CD4-positive, alpha-beta memory T cell (primary cell): ENCODE measurements at regions of chr7 and their contacts with region 1.

Region 1: GRCh38 chr7:98168181-98168905 is 42.9 kb upstream of the BHLHA15 start:
- DNase-seq: peak; percentile 48 to 72 (median 54)
- H3K4me3 ChIP-seq: no peak overlapping the region
- H3K4me3 Mint-ChIP-seq: no peak overlapping the region
- H3K27ac ChIP-seq: no peak overlapping the region
- H3K27ac Mint-ChIP-seq: peak overlapping the region in 1 of 7 donors; percentile 57
- H3K4me1 ChIP-seq: no peaks in the 10 kb centered on the region
- H3K4me1 Mint-ChIP-seq: peaks cover 4 to 11% (median 9%) of the 10 kb centered on the region in 4 donors
- H3K27me3 ChIP-seq: no peaks in the 10 kb centered on the region
- H3K27me3 Mint-ChIP-seq: no peaks in the 10 kb centered on the region

Region 2: DNA sequence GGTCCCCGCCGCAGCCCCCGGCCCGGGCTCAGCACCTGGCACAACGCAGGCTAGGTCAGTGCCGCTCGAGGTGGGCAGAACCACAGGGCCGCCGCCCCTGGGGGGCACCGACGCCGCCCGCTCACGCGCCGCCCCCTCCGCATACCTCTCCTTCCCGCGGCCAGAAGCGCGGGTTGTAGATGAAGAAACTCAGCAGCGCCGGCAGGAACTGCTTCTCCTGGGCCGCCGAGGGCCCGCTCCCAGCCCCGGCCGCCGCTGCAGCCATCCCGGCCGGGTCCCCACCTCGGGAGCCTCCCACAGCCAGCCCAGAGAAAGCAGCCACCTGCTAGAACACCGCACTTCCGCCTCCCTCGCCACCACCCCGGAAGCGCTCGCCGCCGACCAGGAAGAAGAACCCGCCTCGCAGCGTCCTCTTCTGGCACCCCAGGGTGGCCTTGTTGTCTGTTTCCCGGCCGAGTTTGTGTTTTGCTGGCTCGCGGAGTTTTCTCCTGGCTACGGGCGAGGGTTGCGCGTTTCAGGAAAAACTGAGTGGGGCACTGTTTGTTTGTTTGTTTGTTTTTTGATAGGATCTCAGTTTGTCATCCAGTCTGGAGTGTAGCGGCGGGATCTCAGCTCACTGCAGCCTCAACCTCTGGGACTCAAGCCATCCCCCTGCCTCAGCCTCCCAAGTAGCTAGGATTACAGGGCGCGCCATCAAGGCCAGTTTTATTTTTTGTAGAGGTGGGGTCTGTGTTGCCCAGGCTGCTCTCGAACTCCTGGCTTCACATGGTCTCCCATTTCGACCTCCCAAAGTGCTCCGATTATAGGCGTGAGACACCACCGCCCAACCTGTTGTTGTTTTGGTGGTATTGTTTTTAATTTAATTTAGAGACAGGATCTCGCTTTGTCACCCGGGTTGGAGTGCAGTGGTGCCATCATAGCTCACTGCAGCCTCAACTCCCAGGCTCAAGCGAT is 196.1 kb before region 1 on chr7:
- CTCF ChIA-PET with region 1: no interaction called
- POLR2A ChIA-PET with region 1: no interaction called
- intact Hi-C with region 1: loop called (anchors 5 kb)
- DNase-seq: peak; percentile 81 to 85 (median 83)
- H3K4me3 ChIP-seq: peak overlapping the region; percentile 91 to 93
- H3K4me3 Mint-ChIP-seq: peak overlapping the region; percentile 93 to 98 (median 96)
- H3K27ac ChIP-seq: peak overlapping the region; percentile 65
- H3K27ac Mint-ChIP-seq: peak overlapping the region; percentile 86 to 96 (median 95)
- H3K4me1 ChIP-seq: peaks cover 15% of the 10 kb centered on the region
- H3K4me1 Mint-ChIP-seq: peaks cover 10 to 35% (median 19%) of the 10 kb centered on the region in 4 donors
- H3K27me3 ChIP-seq: no peaks in the 10 kb centered on the region
- H3K27me3 Mint-ChIP-seq: no peaks in the 10 kb centered on the region

Region 3: DNA sequence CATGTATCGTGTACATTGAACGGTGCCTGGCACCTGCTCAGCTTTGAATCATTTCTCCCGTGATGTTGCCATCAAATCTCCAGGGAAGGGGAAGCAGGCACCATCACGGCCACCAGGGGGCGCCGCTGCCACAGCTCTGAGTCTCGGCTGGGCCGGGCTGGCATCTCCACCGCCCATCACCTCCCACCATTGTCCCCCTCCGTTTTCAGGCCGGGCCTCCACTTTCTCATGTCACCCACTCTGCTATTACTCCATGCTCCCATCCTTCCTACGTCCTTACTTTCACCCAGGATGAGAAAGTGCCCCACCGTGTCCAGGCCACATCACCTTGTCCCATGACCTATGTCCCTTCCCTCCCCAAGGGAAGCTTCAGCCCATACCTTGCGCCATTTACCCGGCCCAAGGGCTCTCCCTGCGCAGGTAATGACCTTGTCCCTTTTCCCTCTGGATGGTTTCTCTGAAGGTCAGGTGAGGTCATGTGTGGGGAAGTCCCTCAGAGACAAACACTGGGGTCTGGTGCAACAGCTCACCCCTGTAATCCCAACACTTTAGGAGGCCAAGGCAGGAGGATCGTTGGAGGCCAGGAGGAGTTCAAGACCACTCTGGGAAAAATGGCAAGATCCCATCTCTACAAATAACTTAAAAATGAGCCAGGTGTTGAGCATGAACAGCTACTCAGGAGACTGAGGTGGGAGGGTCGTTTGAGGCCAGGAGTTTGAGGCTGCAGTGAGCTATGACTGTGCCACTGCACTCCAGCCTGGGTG is 146.6 kb before region 1 on chr7:
- CTCF ChIA-PET with region 1: interaction called, 331 read pairs
- POLR2A ChIA-PET with region 1: interaction called, 3 read pairs
- intact Hi-C with region 1: loop called (anchors 1 kb)
- DNase-seq: peak; percentile 61 to 69 (median 64)
- H3K4me3 ChIP-seq: no peak overlapping the region
- H3K4me3 Mint-ChIP-seq: no peak overlapping the region
- H3K27ac ChIP-seq: no peak overlapping the region
- H3K27ac Mint-ChIP-seq: peak overlapping the region in 2 of 7 donors; percentile 34 to 37
- H3K4me1 ChIP-seq: no peaks in the 10 kb centered on the region
- H3K4me1 Mint-ChIP-seq: peaks cover 0 to 5% (median 4%) of the 10 kb centered on the region in 4 donors
- H3K27me3 ChIP-seq: no peaks in the 10 kb centered on the region
- H3K27me3 Mint-ChIP-seq: peaks cover 2 to 13% of the 10 kb centered on the region in 2 donors

Region 4: DNA sequence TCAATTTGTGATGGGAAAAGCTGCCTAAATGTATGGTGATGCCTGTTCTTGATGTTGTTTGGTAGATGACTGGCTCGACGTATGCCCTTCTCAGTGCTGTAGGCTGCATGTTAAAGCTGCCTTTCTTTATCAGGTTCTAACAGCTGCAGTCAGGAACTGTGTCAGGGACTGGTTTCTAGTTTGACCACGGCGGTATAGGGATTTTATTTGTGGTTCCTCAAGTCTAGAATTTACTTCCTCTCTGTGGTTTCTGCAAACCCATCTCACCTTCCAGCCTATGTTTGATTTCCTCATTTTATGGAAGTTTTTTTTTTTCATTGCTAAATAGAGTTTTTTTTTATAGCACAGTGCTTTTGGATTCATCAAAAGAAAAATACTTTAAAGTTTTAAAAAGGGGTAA is 35.2 kb before region 1 on chr7:
- CTCF ChIA-PET with region 1: interaction called, 19 read pairs
- POLR2A ChIA-PET with region 1: no interaction called
- intact Hi-C with region 1: no loop called
- DNase-seq: peak; percentile 33 to 54 (median 45)
- H3K4me3 ChIP-seq: peak overlapping the region in 1 of 2 donors; percentile 27
- H3K4me3 Mint-ChIP-seq: peak overlapping the region in 7 of 8 donors; percentile 42 to 82 (median 67)
- H3K27ac ChIP-seq: no peak overlapping the region
- H3K27ac Mint-ChIP-seq: peak overlapping the region in 2 of 7 donors; percentile 5 to 45
- H3K4me1 ChIP-seq: peaks cover 43% of the 10 kb centered on the region
- H3K4me1 Mint-ChIP-seq: peaks cover 44 to 62% (median 51%) of the 10 kb centered on the region in 4 donors
- H3K27me3 ChIP-seq: no peaks in the 10 kb centered on the region
- H3K27me3 Mint-ChIP-seq: peaks cover 0 to 1% of the 10 kb centered on the region in 2 donors

Region 5: GRCh38 chr7:98178347-98178746 is 10.0 kb after region 1 on chr7:
- CTCF ChIA-PET with region 1: interaction called, 44 read pairs
- POLR2A ChIA-PET with region 1: no interaction called
- intact Hi-C with region 1: no loop called
- DNase-seq: no peak
- H3K4me3 ChIP-seq: no peak overlapping the region
- H3K4me3 Mint-ChIP-seq: no peak overlapping the region
- H3K27ac ChIP-seq: no peak overlapping the region
- H3K27ac Mint-ChIP-seq: peak overlapping the region in 1 of 7 donors; percentile 17
- H3K4me1 ChIP-seq: no peaks in the 10 kb centered on the region
- H3K4me1 Mint-ChIP-seq: no peaks in the 10 kb centered on the region
- H3K27me3 ChIP-seq: no peaks in the 10 kb centered on the region
- H3K27me3 Mint-ChIP-seq: no peaks in the 10 kb centered on the region

Region 6: DNA sequence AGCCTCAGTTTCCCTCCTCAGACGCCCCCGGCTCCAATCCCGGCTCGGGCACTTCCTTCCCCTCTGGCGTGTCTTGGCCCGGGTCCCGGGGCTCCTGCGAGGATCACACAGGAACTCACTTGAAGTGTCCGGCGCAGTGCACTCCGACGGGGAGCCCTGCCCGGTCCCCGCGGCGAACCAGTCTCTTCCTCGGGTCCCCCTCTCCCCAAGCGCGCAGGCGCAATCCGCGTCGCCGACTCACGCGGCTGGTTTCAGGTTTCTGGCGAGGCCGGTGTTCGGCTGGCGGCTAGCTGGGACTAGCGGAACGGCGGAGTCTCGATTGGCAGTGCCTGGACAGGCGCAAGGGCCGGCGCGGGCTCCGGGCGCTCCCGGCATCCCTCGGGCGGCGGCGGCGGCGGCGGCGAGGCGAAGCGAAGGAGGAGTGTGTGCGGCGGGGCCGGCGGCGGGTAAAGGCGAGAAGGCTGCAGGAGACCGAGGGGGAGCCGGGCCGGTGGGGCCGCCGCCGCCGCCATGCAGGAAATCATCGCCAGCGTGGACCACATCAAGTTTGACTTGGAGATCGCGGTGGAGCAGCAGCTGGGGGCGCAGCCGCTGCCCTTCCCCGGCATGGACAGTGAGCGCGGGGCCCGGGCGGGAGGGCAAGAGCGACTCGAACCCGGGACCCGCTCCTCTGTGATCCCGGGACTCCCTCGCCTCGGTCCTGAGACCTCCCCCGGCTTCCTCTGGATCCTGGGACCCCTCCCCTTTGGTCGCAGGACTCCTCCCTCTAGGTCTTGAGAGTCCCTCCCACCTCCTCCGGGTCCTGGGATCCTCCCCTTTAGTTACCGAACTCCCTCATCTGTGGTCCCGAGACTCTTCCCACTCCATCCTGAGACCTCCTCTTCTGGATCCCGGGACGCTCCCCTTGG is 1270.5 kb after region 1 on chr7 and contains the starts of genes CPSF4 and PTCD1:
- CTCF ChIA-PET with region 1: no interaction called
- POLR2A ChIA-PET with region 1: no interaction called
- intact Hi-C with region 1: no loop called
- DNase-seq: peak; percentile 84 to 87 (median 84)
- H3K4me3 ChIP-seq: peak within 1 kb of the TSS; percentile 77 to 93
- H3K4me3 Mint-ChIP-seq: peak within 1 kb of the TSS; percentile 95 to 98 (median 97)
- H3K27ac ChIP-seq: peak within 1 kb of the TSS; percentile 61
- H3K27ac Mint-ChIP-seq: peak within 1 kb of the TSS; percentile 91 to 96 (median 95)
- H3K4me1 ChIP-seq: peaks cover 17% of the 10 kb centered on the region
- H3K4me1 Mint-ChIP-seq: peaks cover 15 to 40% (median 30%) of the 10 kb centered on the region in 4 donors
- H3K27me3 ChIP-seq: no peaks in the 10 kb centered on the region
- H3K27me3 Mint-ChIP-seq: no peaks in the 10 kb centered on the region
- total RNA-seq, gene CPSF4: 49.2 to 54.7 TPM
- total RNA-seq, gene PTCD1: 7.4 to 7.7 TPM